Left lung (tissue), 14 donors: ENCODE measurements at regions of chr1 and their contacts with region 1.

Region 1: DNA sequence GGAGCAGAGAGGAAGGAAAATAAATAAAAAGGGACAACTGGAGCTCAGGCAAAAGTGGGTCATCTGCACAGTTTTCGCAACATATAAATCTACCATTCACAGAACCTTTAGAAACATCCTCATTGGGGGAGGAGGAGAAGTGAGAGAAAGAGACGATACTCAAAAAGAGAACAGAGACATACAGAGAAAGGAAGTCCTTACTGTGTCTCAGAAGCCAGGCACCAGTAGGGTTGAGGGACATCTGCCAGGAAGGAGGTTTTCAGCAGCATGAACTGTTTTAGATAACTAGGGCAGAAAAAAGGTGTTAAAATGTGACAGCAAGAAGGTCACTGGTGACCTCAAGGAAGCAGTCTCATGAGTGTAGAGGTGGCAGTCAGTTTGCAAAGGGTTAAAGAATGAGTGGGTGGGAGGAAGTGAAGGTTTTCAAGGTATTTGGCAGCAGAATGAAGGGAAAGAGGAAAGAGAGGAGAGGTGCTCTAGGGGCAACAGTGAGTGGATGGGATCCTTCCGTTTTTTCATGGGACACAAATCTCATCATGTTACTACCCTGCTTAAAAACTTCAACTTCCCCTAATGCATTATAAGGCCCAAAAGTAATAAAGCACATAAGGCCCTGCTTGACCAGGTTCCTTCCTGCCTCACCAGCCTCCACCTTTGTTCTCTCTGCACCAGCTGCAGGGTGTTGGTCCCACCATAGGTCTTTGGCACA is 9.5 kb downstream of the JAK1 start:
- DNase-seq: no peak
- ATAC-seq: peak; percentile 21
- H3K4me3 ChIP-seq: no peak overlapping the region
- H3K27ac ChIP-seq: peak overlapping the region in 1 of 2 donors; percentile 71
- H3K4me1 ChIP-seq: peaks cover 24 to 86% of the 10 kb centered on the region in 2 donors
- H3K27me3 ChIP-seq: no peaks in the 10 kb centered on the region
- CTCF ChIP-seq: no peak

Region 2: GRCh38 chr1:64733581-64734286 is 223.2 kb before region 1 on chr1:
- intact Hi-C with region 1: no loop called
- DNase-seq: no peak
- ATAC-seq: no peak
- H3K4me3 ChIP-seq: no peak overlapping the region
- H3K27ac ChIP-seq: no peak overlapping the region
- H3K4me1 ChIP-seq: no peaks in the 10 kb centered on the region
- H3K27me3 ChIP-seq: no peaks in the 10 kb centered on the region
- CTCF ChIP-seq: no peak

Region 3: DNA sequence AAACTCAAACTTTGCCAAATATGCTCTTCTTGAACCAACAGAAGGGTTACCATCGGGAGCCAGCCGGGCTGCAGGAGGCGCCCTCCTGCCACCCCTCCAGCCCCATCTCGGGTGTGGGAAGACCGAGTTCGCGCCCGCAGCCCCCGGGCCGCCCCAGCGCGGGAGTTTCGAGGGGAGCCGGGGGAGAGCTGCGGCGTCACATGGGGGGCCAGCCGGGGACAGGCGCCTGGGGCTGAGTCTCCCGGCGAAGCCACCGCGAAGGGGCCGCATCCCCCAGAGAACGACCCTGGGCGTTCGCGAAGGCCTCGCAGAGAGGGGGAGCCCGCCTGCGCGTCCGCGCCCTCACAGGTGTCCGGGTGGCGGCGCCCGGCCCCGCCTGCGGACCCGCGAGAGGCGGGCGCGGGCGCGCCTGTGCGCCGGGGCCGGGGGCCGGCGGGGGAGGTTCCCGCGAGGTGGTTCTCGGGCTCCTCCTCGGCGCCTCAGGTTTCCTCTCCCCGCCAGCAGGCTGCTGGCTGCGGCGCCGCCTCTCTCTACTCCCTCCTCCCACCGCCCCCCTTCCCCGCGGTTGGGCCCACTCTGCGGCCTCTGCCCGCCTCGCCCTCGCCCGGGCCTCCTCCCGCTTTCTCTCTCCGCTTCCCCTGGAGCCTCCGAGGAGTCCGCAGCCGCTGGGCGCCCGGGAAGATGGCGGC is 212.3 kb before region 1 on chr1 and contains the start of gene RAVER2:
- intact Hi-C with region 1: no loop called
- DNase-seq: peak; percentile 75 to 93 (median 85)
- ATAC-seq: peak; percentile 92
- H3K4me3 ChIP-seq: peak within 1 kb of the TSS; percentile 68 to 71
- H3K27ac ChIP-seq: peak within 1 kb of the TSS; percentile 81 to 86
- H3K4me1 ChIP-seq: peaks cover 0 to 17% of the 10 kb centered on the region in 2 donors
- H3K27me3 ChIP-seq: no peaks in the 10 kb centered on the region
- CTCF ChIP-seq: peak in 1 of 2 donors; percentile 17
- polyA plus RNA-seq, gene RAVER2: 30.8 to 37.8 (median 33.0) TPM

Region 4: GRCh38 chr1:64775113-64775512 is 181.8 kb before region 1 on chr1:
- intact Hi-C with region 1: no loop called
- DNase-seq: no peak
- ATAC-seq: no peak
- H3K4me3 ChIP-seq: no peak overlapping the region
- H3K27ac ChIP-seq: no peak overlapping the region
- H3K4me1 ChIP-seq: no peaks in the 10 kb centered on the region
- H3K27me3 ChIP-seq: no peaks in the 10 kb centered on the region
- CTCF ChIP-seq: no peak

Region 5: GRCh38 chr1:64856553-64856952 is 100.3 kb before region 1 on chr1:
- intact Hi-C with region 1: no loop called
- DNase-seq: peak in 2 of 4 donors; percentile 54 to 80
- ATAC-seq: peak; percentile 67
- H3K4me3 ChIP-seq: no peak overlapping the region
- H3K27ac ChIP-seq: no peak overlapping the region
- H3K4me1 ChIP-seq: peaks cover 0 to 11% of the 10 kb centered on the region in 2 donors
- H3K27me3 ChIP-seq: no peaks in the 10 kb centered on the region
- CTCF ChIP-seq: no peak

Region 6: DNA sequence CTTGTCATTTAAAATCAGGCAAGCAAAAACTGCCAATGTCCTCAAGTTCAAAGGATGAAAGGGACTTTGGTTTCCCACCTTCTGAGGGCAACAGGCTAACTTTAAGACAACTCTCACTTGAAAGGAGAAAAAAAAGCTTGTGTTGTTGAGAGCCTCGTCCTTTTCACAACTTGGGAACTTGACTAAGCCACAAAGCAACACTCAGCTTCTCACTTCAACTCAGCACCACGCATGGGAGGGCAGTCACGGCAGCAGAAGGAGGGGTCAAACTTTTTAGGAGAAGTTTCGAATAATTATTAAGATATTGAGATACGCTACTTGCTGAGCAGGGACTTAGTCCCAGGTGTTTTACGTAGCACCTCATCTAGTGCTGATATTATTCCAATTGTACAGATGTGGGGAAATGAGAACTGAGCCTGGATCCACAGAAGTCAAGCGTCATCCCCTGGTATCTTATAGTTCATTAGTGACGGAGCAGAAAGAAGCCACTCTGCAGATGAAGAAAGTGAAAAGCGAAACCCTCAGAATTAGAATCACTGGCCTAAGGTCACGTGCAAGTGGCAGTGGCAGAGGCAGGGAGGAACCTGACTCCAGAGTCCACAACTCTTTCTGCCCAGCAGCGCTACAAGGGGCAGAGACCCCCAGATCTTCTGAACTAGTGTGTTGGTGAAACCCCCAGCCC is 74.2 kb before region 1 on chr1:
- intact Hi-C with region 1: loop called in 1 of 2 experiments (anchors 10 kb)
- DNase-seq: no peak
- ATAC-seq: no peak
- H3K4me3 ChIP-seq: no peak overlapping the region
- H3K27ac ChIP-seq: no peak overlapping the region
- H3K4me1 ChIP-seq: peaks cover 0 to 7% of the 10 kb centered on the region in 2 donors
- H3K27me3 ChIP-seq: no peaks in the 10 kb centered on the region
- CTCF ChIP-seq: no peak